ENCODE measurements at regions of chr18 and their contacts with region 1.

Region 1: GRCh38 chr18:70075906-70076305 is 128.2 kb upstream of the CD226 start:
- DNase-seq: no peak
- H3K4me3 ChIP-seq: no peak overlapping the region
- H3K27ac ChIP-seq: no peak overlapping the region
- H3K4me1 ChIP-seq: no peaks in the 10 kb centered on the region
- H3K27me3 ChIP-seq: no peaks in the 10 kb centered on the region
- CTCF ChIP-seq: no peak
- EP300 ChIP-seq: no peak
- POLR2A ChIP-seq: no peak

Region 2: GRCh38 chr18:70022636-70023035 is 53.3 kb before region 1 on chr18:
- intact Hi-C with region 1: loop called (anchors 2 kb)
- DNase-seq: no peak
- H3K4me3 ChIP-seq: no peak overlapping the region
- H3K27ac ChIP-seq: no peak overlapping the region
- H3K4me1 ChIP-seq: no peaks in the 10 kb centered on the region
- H3K27me3 ChIP-seq: no peaks in the 10 kb centered on the region
- CTCF ChIP-seq: no peak
- EP300 ChIP-seq: no peak
- POLR2A ChIP-seq: no peak